A673 (cell line): ENCODE measurements at regions of chr6 and their contacts with region 1.

Region 1: GRCh38 chr6:26553635-26554446 is 15.7 kb downstream of the HMGN4 start:
- DNase-seq: peak; percentile 89
- H3K4me3 ChIP-seq: peak overlapping the region; percentile 61
- H3K27ac ChIP-seq: peak overlapping the region; percentile 69
- H3K4me1 ChIP-seq: no peaks in the 10 kb centered on the region
- H3K27me3 ChIP-seq: no peaks in the 10 kb centered on the region
- CTCF ChIP-seq: no peak

Region 2: GRCh38 chr6:26054857-26055669 is 498.8 kb before region 1 on chr6:
- CTCF ChIA-PET with region 1: no interaction called
- POLR2A ChIA-PET with region 1: no interaction called
- intact Hi-C with region 1: loop called (anchors 10 kb)
- DNase-seq: peak; percentile 96
- H3K4me3 ChIP-seq: peak overlapping the region; percentile 78
- H3K27ac ChIP-seq: peak overlapping the region; percentile 96
- H3K4me1 ChIP-seq: peaks cover 20% of the 10 kb centered on the region
- H3K27me3 ChIP-seq: no peaks in the 10 kb centered on the region
- CTCF ChIP-seq: no peak

Region 3: GRCh38 chr6:26322645-26323482 is 231.0 kb before region 1 on chr6:
- CTCF ChIA-PET with region 1: interaction called, 3 read pairs
- POLR2A ChIA-PET with region 1: no interaction called
- intact Hi-C with region 1: loop called (anchors 2 kb)
- DNase-seq: peak; percentile 96
- H3K4me3 ChIP-seq: peak overlapping the region; percentile 65
- H3K27ac ChIP-seq: peak overlapping the region; percentile 59
- H3K4me1 ChIP-seq: no peaks in the 10 kb centered on the region
- H3K27me3 ChIP-seq: no peaks in the 10 kb centered on the region
- CTCF ChIP-seq: no peak

Region 4: DNA sequence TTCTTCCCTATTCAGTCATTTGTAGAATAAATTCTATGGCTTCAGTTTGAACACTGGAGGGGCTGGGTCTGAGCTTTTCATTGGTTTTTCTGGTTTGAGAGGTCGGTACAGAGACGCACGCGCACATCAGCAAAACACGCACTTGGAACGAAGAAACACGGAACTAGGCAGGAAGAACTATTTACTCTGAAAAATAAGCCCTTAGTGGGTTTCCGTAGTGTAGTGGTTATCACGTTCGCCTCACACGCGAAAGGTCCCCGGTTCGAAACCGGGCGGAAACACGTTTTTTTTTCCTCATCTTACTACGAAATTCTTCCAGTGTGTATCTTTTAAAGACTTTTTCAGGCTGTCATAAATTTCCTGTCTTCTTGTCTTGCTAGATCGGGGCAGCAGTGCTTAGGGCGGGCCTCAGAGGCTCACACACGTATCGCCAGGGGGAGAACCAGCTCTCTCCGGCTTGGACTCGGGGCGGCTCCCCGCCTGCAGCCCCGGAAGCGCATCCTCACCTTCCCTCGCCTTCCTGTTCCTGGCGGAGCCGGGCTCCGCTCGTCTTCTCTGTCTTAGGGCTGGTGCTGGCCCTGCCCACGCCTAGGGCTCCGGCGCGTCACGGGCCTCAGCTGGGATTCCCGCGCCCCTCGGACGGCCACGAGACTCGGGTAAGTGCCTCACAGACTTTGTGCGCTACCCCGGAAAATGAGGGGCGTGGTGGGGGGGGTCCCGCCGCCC is 15.8 kb before region 1 on chr6 and contains the start of gene HMGN4:
- CTCF ChIA-PET with region 1: no interaction called
- POLR2A ChIA-PET with region 1: no interaction called
- intact Hi-C with region 1: loop called (anchors 1 kb)
- DNase-seq: peak; percentile 94
- H3K4me3 ChIP-seq: peak within 1 kb of the TSS; percentile 83
- H3K27ac ChIP-seq: peak within 1 kb of the TSS; percentile 86
- H3K4me1 ChIP-seq: peaks cover 32% of the 10 kb centered on the region
- H3K27me3 ChIP-seq: no peaks in the 10 kb centered on the region
- CTCF ChIP-seq: peak; percentile 22; the same call in 1 of the 2 replicates
- total RNA-seq, gene HMGN4: 55.9 and 58.6 TPM in 2 replicates